ENCODE measurements at regions of chr16 and their contacts with region 1.

Region 1: GRCh38 chr16:12436201-12436657 is 367.5 kb downstream of the CPPED1 start:
- DNase-seq: peak in 1 of 10 donors; percentile 72
- H3K4me3 ChIP-seq: no peak overlapping the region
- H3K27ac ChIP-seq: peak overlapping the region in 25 of 59 donors; percentile 8 to 69 (median 31)
- H3K27me3 ChIP-seq: no peaks in the 10 kb centered on the region
- CTCF ChIP-seq: no peak

Region 2: GRCh38 chr16:12228602-12229499 is 207.4 kb before region 1 on chr16:
- intact Hi-C with region 1: loop called in 1 of 2 experiments (anchors 5 kb)
- DNase-seq: peak; percentile 23 to 78 (median 74)
- H3K4me3 ChIP-seq: no peak overlapping the region
- H3K27ac ChIP-seq: no peak overlapping the region
- H3K27me3 ChIP-seq: no peaks in the 10 kb centered on the region
- CTCF ChIP-seq: peak in 55 of 56 donors; percentile 16 to 84 (median 72)

Region 3: GRCh38 chr16:12356618-12357355 is 79.4 kb before region 1 on chr16:
- intact Hi-C with region 1: loop called in 1 of 2 experiments (anchors 5 kb)
- DNase-seq: no peak
- H3K4me3 ChIP-seq: peak overlapping the region in 2 of 59 donors; percentile 0 to 9
- H3K27ac ChIP-seq: peak overlapping the region in 23 of 59 donors; percentile 10 to 74 (median 41)
- H3K27me3 ChIP-seq: no peaks in the 10 kb centered on the region
- CTCF ChIP-seq: peak in 9 of 56 donors; percentile 8 to 37 (median 20)